Mammary epithelial cell (primary cell): ENCODE measurements at regions of chr9 and their contacts with region 1.

Region 1: DNA sequence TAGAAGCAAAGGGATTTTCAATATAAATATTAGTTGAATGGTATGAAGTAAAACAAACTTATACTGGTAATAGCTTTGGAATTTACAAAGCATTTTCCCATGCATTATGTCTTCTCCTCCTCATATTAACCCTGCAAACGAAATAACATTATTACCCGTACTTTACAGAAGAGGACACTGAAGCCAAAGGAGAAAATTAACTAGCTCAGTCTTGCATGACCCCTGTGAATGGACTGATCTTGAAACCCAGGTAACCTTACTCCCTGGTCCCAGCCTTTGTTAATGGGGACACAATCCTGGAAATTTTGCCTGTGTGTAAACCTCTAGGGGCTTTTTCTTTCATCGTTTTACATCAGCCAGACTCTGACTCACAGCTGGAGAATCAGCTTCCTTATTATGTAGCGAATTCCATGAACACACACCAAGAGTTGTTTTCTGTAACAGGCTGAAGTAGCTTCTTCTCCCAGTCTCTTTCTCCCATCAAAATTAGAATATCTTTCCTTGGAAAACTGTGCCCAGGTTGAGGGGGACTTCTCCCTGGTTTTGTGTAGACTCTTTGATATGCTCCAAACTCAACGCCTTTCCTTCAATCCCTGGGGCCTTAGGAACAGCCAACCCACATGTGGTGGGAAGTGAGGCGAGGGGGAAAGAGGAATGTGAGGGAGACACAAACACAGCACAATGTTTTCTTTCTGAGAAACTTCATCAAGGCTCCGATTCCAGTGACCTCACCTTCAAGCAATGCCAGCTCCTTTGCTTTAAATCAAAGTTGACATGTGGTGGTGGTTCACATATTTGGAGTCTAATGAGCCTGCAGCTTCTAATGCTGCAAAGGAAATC is 480.9 kb upstream of the PAPPA start:
- DNase-seq: peak; percentile 95
- H3K4me3 ChIP-seq: no peak overlapping the region
- H3K27ac ChIP-seq: peak overlapping the region; percentile 95
- H3K4me1 ChIP-seq: peaks cover 45% of the 10 kb centered on the region
- H3K27me3 ChIP-seq: no peaks in the 10 kb centered on the region
- CTCF ChIP-seq: no peak

Region 2: GRCh38 chr9:115456515-115456914 is 216.2 kb before region 1 on chr9:
- CTCF ChIA-PET with region 1: no interaction called
- dilution Hi-C with region 1: no loop called
- in situ Hi-C with region 1: no loop called
- intact Hi-C with region 1: no loop called
- DNase-seq: no peak
- H3K4me3 ChIP-seq: no peak overlapping the region
- H3K27ac ChIP-seq: no peak overlapping the region
- H3K4me1 ChIP-seq: no peaks in the 10 kb centered on the region
- H3K27me3 ChIP-seq: no peaks in the 10 kb centered on the region
- CTCF ChIP-seq: no peak

Region 3: GRCh38 chr9:115643948-115644727 is 28.6 kb before region 1 on chr9:
- CTCF ChIA-PET with region 1: no interaction called
- dilution Hi-C with region 1: no loop called
- in situ Hi-C with region 1: no loop called
- intact Hi-C with region 1: loop called (anchors 2 kb)
- DNase-seq: peak; percentile 26
- H3K4me3 ChIP-seq: no peak overlapping the region
- H3K27ac ChIP-seq: peak overlapping the region; percentile 29
- H3K4me1 ChIP-seq: peaks cover 39% of the 10 kb centered on the region
- H3K27me3 ChIP-seq: no peaks in the 10 kb centered on the region
- CTCF ChIP-seq: no peak